Naive thymus-derived CD4-positive, alpha-beta T cell (primary cell): ENCODE measurements at regions of chr1 and their contacts with region 1.

Region 1: DNA sequence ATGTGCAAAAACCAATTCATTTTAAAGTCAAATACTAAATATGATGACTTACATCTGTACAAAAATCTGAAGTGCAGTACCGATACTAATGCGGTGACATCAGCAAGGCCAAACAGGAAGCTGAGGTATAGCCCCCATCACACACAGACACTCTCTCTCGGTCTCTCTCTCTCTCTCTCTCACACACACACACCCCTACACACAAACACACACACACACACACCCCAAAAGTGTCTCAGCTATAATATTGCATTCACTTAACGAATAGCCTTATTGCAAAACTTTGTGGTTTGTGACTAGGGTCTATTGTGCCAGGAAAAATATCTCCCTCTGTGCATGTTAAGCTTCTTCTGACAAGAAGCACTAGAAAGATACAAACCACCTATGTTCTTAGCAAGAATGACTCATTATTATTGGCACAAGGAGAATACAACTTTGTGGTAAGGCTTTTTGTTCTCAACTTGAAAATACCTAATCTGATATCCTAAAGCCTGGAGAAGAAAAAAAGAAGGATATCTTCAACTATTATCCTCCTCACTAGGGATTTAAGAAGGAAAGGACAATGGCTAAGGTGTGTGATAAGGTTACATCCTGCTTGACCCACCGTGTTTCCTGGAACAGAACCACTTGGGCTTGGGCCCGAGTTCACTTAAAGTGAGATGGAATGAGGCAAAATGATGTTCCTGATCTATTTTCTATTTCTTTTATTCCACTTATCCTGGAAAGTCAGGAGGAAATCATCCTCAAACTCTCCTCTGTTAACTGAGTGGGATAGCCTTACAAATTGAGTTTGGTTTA is 107.1 kb downstream of the NIBAN1 start:
- DNase-seq: peak in 6 of 9 donors; percentile 10 to 36 (median 13)
- ATAC-seq: peak; percentile 92
- H3K4me3 ChIP-seq: no peak overlapping the region
- H3K4me3 Mint-ChIP-seq: peak overlapping the region in 6 of 10 donors; percentile 4 to 66 (median 28)
- H3K27ac ChIP-seq: no peak overlapping the region
- H3K27ac Mint-ChIP-seq: peak overlapping the region in 6 of 9 donors; percentile 0 to 81 (median 9)
- H3K4me1 ChIP-seq: peaks cover 0 to 27% of the 10 kb centered on the region in 2 donors
- H3K4me1 Mint-ChIP-seq: peaks cover 11 to 50% (median 14%) of the 10 kb centered on the region in 7 donors
- H3K27me3 ChIP-seq: no peaks in the 10 kb centered on the region
- H3K27me3 Mint-ChIP-seq: peaks cover 0 to 9% (median 5%) of the 10 kb centered on the region in 5 donors

Region 2: GRCh38 chr1:184832517-184832916 is 34.7 kb before region 1 on chr1:
- CTCF ChIA-PET with region 1: no interaction called
- POLR2A ChIA-PET with region 1: no interaction called
- intact Hi-C with region 1: loop called in 1 of 2 experiments (anchors 5 kb)
- DNase-seq: no peak
- ATAC-seq: no peak
- H3K4me3 ChIP-seq: no peak overlapping the region
- H3K4me3 Mint-ChIP-seq: no peak overlapping the region
- H3K27ac ChIP-seq: no peak overlapping the region
- H3K27ac Mint-ChIP-seq: no peak overlapping the region
- H3K4me1 ChIP-seq: no peaks in the 10 kb centered on the region
- H3K4me1 Mint-ChIP-seq: no peaks in the 10 kb centered on the region
- H3K27me3 ChIP-seq: no peaks in the 10 kb centered on the region
- H3K27me3 Mint-ChIP-seq: no peaks in the 10 kb centered on the region

Region 3: GRCh38 chr1:184891440-184891839 is 24.2 kb after region 1 on chr1:
- CTCF ChIA-PET with region 1: interaction called, 3 read pairs
- POLR2A ChIA-PET with region 1: no interaction called
- intact Hi-C with region 1: loop called in 1 of 2 experiments (anchors 1 kb)
- DNase-seq: no peak
- ATAC-seq: no peak
- H3K4me3 ChIP-seq: peak overlapping the region; percentile 6
- H3K4me3 Mint-ChIP-seq: peak overlapping the region in 1 of 10 donors; percentile 26
- H3K27ac ChIP-seq: no peak overlapping the region
- H3K27ac Mint-ChIP-seq: no peak overlapping the region
- H3K4me1 ChIP-seq: peaks cover 0 to 45% of the 10 kb centered on the region in 2 donors
- H3K4me1 Mint-ChIP-seq: peaks cover 0 to 28% (median 0%) of the 10 kb centered on the region in 7 donors
- H3K27me3 ChIP-seq: no peaks in the 10 kb centered on the region
- H3K27me3 Mint-ChIP-seq: no peaks in the 10 kb centered on the region

Region 4: DNA sequence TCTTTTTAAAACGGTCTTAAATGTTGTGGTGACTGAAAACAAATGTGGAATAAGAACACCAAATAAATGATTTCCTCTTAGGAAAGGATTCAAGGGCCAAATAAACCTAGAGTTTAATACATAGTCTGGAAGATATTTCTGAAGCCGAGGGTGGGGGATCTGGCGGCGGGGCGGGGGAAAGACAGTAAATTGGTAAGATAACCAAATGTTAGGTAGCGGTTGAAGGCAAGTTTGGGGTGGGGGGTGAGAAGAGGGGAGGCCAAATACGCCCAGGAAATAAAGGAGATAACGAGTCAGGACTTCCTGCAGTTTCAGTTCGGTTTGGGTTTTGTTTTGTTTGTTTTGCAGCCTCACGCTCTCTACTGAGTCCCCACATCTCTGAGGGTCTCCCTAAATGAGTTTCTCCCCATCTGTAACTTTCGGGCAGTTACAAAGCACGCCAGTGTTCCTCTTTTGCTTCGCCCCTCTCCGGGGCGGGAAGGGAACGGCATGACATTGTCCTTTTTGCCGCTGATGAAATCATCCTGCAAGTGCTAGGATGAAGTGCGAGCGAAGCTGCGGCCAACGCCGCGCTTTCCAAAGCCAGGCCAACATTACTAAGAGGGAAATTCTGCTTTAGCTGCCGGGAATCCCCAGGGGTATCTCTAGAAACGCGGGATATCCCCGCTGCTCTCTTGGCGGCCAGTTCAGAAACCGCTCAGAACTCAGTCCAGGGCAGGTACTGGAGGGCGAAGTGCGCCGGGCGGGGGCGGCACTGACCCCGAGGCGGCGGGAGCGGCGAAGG is 106.3 kb after region 1 on chr1:
- CTCF ChIA-PET with region 1: no interaction called
- POLR2A ChIA-PET with region 1: no interaction called
- intact Hi-C with region 1: loop called in 1 of 2 experiments (anchors 2 kb)
- DNase-seq: peak in 1 of 9 donors; percentile 36
- ATAC-seq: peak; percentile 73
- H3K4me3 ChIP-seq: peak overlapping the region; percentile 63
- H3K4me3 Mint-ChIP-seq: peak overlapping the region; percentile 82 to 96 (median 90)
- H3K27ac ChIP-seq: peak overlapping the region; percentile 7
- H3K27ac Mint-ChIP-seq: peak overlapping the region; percentile 11 to 94 (median 58)
- H3K4me1 ChIP-seq: peaks cover 0 to 24% of the 10 kb centered on the region in 2 donors
- H3K4me1 Mint-ChIP-seq: peaks cover 9 to 56% (median 21%) of the 10 kb centered on the region in 7 donors
- H3K27me3 ChIP-seq: no peaks in the 10 kb centered on the region
- H3K27me3 Mint-ChIP-seq: peaks cover 12 to 38% (median 27%) of the 10 kb centered on the region in 5 donors